ENCODE measurements at regions of chr2 and their contacts with region 1.

Region 1: GRCh38 chr2:181715033-181715630 is 34.8 kb upstream of the NEUROD1 start:
- DNase-seq: peak in 4 of 5 donors; percentile 37 to 63 (median 49)
- ATAC-seq: peak in 3 of 4 donors; percentile 57 to 69 (median 58)
- H3K4me3 ChIP-seq: no peak overlapping the region
- H3K27ac ChIP-seq: no peak overlapping the region
- H3K4me1 ChIP-seq: no peaks in the 10 kb centered on the region
- H3K27me3 ChIP-seq: no peaks in the 10 kb centered on the region
- CTCF ChIP-seq: peak; percentile 46 to 73 (median 63)
- POLR2A ChIP-seq: no peak

Region 2: GRCh38 chr2:180125245-180125962 is 1589.7 kb before region 1 on chr2:
- intact Hi-C with region 1: loop called (anchors 2 to 10 kb)
- DNase-seq: peak; percentile 16 to 64 (median 54)
- ATAC-seq: peak; percentile 73 to 98 (median 94)
- H3K4me3 ChIP-seq: no peak overlapping the region
- H3K27ac ChIP-seq: no peak overlapping the region
- H3K4me1 ChIP-seq: peaks cover 0 to 3% (median 0%) of the 10 kb centered on the region in 12 donors
- H3K27me3 ChIP-seq: peaks cover 0 to 9% (median 0%) of the 10 kb centered on the region in 9 donors
- CTCF ChIP-seq: peak; percentile 22 to 64 (median 51)
- POLR2A ChIP-seq: no peak

Region 3: GRCh38 chr2:181077128-181077709 is 637.9 kb before region 1 on chr2:
- intact Hi-C with region 1: loop called in 6 of 10 experiments (anchors 5 to 10 kb)
- DNase-seq: no peak
- ATAC-seq: peak in 3 of 4 donors; percentile 53 to 68 (median 65)
- H3K4me3 ChIP-seq: no peak overlapping the region
- H3K27ac ChIP-seq: no peak overlapping the region
- H3K4me1 ChIP-seq: peaks cover 0 to 18% (median 9%) of the 10 kb centered on the region in 12 donors
- H3K27me3 ChIP-seq: no peaks in the 10 kb centered on the region
- CTCF ChIP-seq: peak; percentile 55 to 84 (median 72)
- POLR2A ChIP-seq: no peak

Region 4: GRCh38 chr2:181104512-181105115 is 610.5 kb before region 1 on chr2:
- intact Hi-C with region 1: loop called (anchors 2 to 10 kb)
- DNase-seq: no peak
- ATAC-seq: peak in 1 of 4 donors; percentile 46
- H3K4me3 ChIP-seq: no peak overlapping the region
- H3K27ac ChIP-seq: no peak overlapping the region
- H3K4me1 ChIP-seq: peaks cover 0 to 16% (median 0%) of the 10 kb centered on the region in 12 donors
- H3K27me3 ChIP-seq: no peaks in the 10 kb centered on the region
- CTCF ChIP-seq: peak; percentile 44 to 73 (median 61)
- POLR2A ChIP-seq: no peak

Region 5: DNA sequence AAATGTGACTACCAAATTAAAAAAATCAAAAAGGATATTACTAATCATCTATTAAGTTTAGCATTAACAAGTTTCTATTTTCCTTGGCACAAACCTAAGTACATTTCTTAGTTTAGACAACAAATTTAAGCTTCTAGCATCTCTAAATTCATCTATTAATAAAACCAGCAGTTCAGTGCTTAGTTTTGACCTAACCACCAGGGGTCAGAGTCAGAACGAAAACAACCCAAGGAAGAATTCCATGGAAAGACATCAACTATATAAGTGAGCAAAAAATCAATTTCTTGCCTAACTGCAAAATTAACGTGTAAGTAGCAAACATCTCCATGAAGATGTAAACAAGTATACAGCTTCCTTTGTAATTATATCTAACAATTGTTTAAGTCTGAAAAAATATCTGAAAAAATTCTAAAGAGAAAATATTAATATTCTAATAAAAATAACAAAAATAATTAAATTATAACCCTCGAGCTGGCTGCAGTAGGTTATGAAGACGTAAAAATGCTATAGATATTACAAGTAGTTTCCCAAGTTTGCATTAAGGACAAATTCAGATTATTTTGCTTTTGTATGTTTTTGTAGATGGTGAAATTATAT is 141.9 kb before region 1 on chr2:
- intact Hi-C with region 1: loop called in 8 of 10 experiments (anchors 2 to 10 kb)
- DNase-seq: no peak
- ATAC-seq: no peak
- H3K4me3 ChIP-seq: no peak overlapping the region
- H3K27ac ChIP-seq: no peak overlapping the region
- H3K4me1 ChIP-seq: no peaks in the 10 kb centered on the region
- H3K27me3 ChIP-seq: peaks cover 0 to 22% (median 0%) of the 10 kb centered on the region in 9 donors
- CTCF ChIP-seq: peak in 9 of 12 donors; percentile 5 to 45 (median 31)
- POLR2A ChIP-seq: no peak